ENCODE measurements at regions of chr6 and their contacts with region 1.

Region 1: GRCh38 chr6:105974986-105975385 is 111.2 kb upstream of the PRDM1 start:
- DNase-seq: no peak
- H3K4me3 Mint-ChIP-seq: no peak overlapping the region
- H3K27ac Mint-ChIP-seq: no peak overlapping the region
- H3K4me1 Mint-ChIP-seq: peaks cover 15% of the 10 kb centered on the region
- H3K27me3 Mint-ChIP-seq: peaks cover 15% of the 10 kb centered on the region

Region 2: GRCh38 chr6:105941621-105942412 is 33.2 kb before region 1 on chr6:
- CTCF ChIA-PET with region 1: interaction called, 3 read pairs
- POLR2A ChIA-PET with region 1: interaction called, 3 read pairs
- intact Hi-C with region 1: loop called (anchors 5 kb)
- DNase-seq: no peak
- H3K4me3 Mint-ChIP-seq: no peak overlapping the region
- H3K27ac Mint-ChIP-seq: no peak overlapping the region
- H3K4me1 Mint-ChIP-seq: peaks cover 15% of the 10 kb centered on the region
- H3K27me3 Mint-ChIP-seq: peaks cover 2% of the 10 kb centered on the region

Region 3: DNA sequence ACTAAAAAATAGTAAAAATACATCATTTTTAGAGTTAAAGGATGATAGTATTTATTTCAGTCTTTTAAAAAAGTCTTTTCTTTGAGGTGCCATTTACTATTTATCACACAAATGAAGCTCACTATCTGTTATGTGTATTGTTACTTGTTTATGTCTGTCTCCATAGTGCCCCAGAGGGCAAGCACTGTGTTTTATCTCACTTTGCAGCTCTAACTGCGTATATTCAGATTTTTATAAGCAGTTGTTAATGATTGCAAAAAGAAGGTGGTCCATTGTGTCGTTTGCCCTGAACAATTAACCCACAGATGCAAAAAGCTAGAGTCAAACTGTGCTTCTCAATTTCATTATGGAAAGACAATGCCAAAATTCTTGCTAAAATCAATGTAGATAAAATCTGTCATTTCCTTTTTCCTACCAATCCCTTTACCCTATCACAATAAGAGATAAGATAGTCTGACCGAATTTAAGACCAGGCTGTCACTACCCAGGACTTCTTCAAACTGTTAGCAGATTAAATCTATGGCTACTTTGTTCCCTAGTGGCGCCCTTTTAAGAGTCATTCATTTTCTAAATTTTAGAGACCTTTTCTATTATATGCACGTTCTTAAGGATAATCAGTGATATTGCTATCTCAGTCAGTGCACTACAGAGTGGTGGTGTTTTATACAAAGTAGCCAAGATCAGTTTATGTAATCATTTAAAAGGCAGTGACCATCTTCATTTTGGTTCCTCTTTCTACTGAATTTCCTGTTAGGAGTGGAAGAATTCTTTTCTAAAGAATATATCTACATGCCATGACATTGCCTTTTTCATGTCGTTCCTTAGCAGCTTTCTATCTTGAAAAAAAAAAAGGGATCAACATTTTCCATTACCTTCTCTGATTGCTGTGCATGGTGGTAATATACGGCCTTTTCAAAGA is 22.0 kb before region 1 on chr6:
- CTCF ChIA-PET with region 1: no interaction called
- POLR2A ChIA-PET with region 1: no interaction called
- intact Hi-C with region 1: no loop called
- DNase-seq: no peak
- H3K4me3 Mint-ChIP-seq: no peak overlapping the region
- H3K27ac Mint-ChIP-seq: no peak overlapping the region
- H3K4me1 Mint-ChIP-seq: no peaks in the 10 kb centered on the region
- H3K27me3 Mint-ChIP-seq: peaks cover 2% of the 10 kb centered on the region

Region 4: DNA sequence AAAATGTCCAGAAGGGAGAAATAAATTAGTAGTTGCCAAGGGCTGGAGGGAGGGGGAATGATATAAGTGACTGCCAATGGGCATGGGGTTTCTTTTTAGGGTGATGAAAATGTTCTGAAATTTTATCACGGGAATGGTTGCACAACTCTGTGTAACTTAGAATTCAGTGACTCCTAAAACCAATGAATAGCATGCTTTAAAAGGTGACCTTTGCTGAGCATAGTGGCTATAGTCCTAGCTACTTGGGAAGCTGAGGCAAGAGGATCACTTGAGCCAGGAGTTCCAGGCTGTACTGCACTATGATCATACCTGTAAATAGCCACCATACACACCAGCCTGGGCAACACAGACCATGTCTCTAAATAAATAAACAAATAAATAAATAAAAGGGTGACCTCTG is 241.5 kb after region 1 on chr6:
- CTCF ChIA-PET with region 1: no interaction called
- POLR2A ChIA-PET with region 1: no interaction called
- intact Hi-C with region 1: no loop called
- DNase-seq: no peak
- H3K4me3 Mint-ChIP-seq: no peak overlapping the region
- H3K27ac Mint-ChIP-seq: no peak overlapping the region
- H3K4me1 Mint-ChIP-seq: peaks cover 15% of the 10 kb centered on the region
- H3K27me3 Mint-ChIP-seq: no peaks in the 10 kb centered on the region

Measured in activated CD4-positive, alpha-beta memory T cell treated with anti-CD3 and anti-CD28 coated beads for 36 hours (primary cell).